ENCODE measurements at regions of chr10 and their contacts with region 1.

Region 1: DNA sequence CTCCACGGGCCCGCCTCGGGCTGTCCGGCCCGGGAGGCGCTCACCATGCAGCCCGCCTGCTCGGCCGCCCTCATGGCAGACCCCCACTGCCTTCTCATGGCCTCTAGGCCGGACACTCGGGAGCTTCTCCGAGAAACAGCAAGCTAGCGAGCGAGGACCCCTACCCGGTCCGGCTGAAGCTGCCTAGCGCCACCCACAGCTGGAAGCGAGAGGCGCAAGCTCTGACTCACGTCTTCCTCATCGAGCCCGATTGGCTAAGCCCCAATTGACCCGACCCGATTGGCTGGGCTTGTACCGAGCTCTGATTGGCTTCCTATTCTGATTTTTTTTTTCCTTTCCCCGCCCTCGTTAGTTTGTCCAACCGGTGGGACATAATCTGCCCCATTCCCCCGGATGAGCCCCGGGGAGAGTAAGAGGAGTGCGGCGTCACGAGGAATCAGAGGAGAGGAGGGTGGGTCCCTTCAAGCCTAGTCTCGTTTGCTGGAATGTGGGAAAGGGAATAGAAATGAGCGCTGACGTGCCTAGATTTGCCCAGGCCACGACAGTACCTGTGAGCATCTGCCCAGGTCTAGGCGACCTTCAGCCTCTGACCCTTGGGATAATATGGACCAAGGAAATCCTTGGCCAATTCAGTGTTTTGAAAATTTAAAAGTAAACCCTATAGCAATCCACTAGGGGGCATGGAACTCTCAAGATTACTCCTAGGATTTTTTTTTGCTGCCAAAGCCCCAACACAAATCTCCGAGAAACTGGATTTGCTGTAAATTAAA is at the start of gene TYSND1:
- DNase-seq: peak; percentile 80 to 95 (median 90)
- ATAC-seq: peak; percentile 80 to 86 (median 86)
- H3K4me3 ChIP-seq: peak within 1 kb of the TSS; percentile 70 to 81
- H3K4me3 Mint-ChIP-seq: peak within 1 kb of the TSS; percentile 89 to 92 (median 91)
- H3K27ac ChIP-seq: peak within 1 kb of the TSS; percentile 70
- H3K27ac Mint-ChIP-seq: peak within 1 kb of the TSS; percentile 93 to 94
- H3K4me1 ChIP-seq: peaks cover 7 to 34% of the 10 kb centered on the region in 2 experiments
- H3K4me1 Mint-ChIP-seq: peaks cover 39 to 46% (median 42%) of the 10 kb centered on the region in 3 donors
- H3K27me3 ChIP-seq: no peaks in the 10 kb centered on the region
- H3K27me3 Mint-ChIP-seq: no peaks in the 10 kb centered on the region
- total RNA-seq, gene TYSND1: 18.3 to 41.0 (median 38.7) TPM

Region 2: GRCh38 chr10:70063418-70064098 is 83.1 kb before region 1 on chr10:
- CTCF ChIA-PET with region 1: no interaction called
- POLR2A ChIA-PET with region 1: no interaction called
- DNase-seq: no peak
- ATAC-seq: no peak
- H3K4me3 ChIP-seq: no peak overlapping the region
- H3K4me3 Mint-ChIP-seq: no peak overlapping the region
- H3K27ac ChIP-seq: no peak overlapping the region
- H3K27ac Mint-ChIP-seq: no peak overlapping the region
- H3K4me1 ChIP-seq: no peaks in the 10 kb centered on the region
- H3K4me1 Mint-ChIP-seq: no peaks in the 10 kb centered on the region
- H3K27me3 ChIP-seq: no peaks in the 10 kb centered on the region
- H3K27me3 Mint-ChIP-seq: peaks cover 0 to 2% of the 10 kb centered on the region in 2 donors

Region 3: DNA sequence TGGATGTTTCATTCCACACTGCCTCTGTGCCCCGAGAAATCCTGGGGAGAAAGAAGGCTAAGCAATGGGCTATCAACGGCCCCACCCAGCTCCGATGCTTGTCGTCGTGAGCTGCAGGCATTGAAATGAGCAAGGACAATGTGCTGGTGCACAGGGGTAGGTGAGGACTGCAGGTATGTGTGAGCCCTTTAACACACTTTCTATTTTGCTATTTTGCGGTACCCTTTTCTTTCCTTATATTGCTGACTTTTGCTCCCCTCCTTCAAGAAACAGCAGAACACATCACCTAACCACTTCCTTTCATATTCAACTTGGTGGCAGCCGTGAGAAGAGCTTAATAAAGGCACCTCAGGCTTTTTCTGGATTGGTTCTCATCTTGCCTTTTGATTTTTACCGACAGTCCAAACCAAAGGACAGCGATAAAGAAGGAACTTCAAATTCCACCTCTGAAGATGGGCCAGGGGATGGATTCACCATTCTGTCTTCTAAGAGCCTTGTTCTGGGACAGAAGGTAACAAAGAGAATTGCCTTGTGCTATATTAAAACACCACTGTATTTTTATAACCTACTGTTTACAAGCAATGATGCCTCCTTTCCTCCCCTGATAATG is 53.2 kb before region 1 on chr10:
- CTCF ChIA-PET with region 1: interaction called in 1 of 2 experiments, 30 read pairs
- POLR2A ChIA-PET with region 1: interaction called, 4 read pairs
- DNase-seq: peak in 17 of 35 experiments; percentile 1 to 61 (median 12)
- ATAC-seq: peak; percentile 72 to 79 (median 74)
- H3K4me3 ChIP-seq: peak overlapping the region; percentile 42 to 54
- H3K4me3 Mint-ChIP-seq: peak overlapping the region; percentile 86 to 90 (median 90)
- H3K27ac ChIP-seq: peak overlapping the region; percentile 88
- H3K27ac Mint-ChIP-seq: peak overlapping the region; percentile 96 to 98
- H3K4me1 ChIP-seq: peaks cover 17 to 34% of the 10 kb centered on the region in 2 experiments
- H3K4me1 Mint-ChIP-seq: peaks cover 44 to 59% (median 58%) of the 10 kb centered on the region in 3 donors
- H3K27me3 ChIP-seq: no peaks in the 10 kb centered on the region
- H3K27me3 Mint-ChIP-seq: no peaks in the 10 kb centered on the region

Region 4: GRCh38 chr10:70162892-70163201 is 16.2 kb after region 1 on chr10:
- CTCF ChIA-PET with region 1: interaction called, 6 to 104 read pairs
- POLR2A ChIA-PET with region 1: interaction called, 4 read pairs
- DNase-seq: peak in 32 of 35 experiments; percentile 23 to 69 (median 46)
- ATAC-seq: peak; percentile 75 to 90 (median 81)
- H3K4me3 ChIP-seq: peak overlapping the region in 1 of 2 donors; percentile 27
- H3K4me3 Mint-ChIP-seq: peak overlapping the region; percentile 53 to 66 (median 59)
- H3K27ac ChIP-seq: peak overlapping the region; percentile 55
- H3K27ac Mint-ChIP-seq: peak overlapping the region; percentile 83 to 86
- H3K4me1 ChIP-seq: peaks cover 44 to 45% of the 10 kb centered on the region in 2 experiments
- H3K4me1 Mint-ChIP-seq: peaks cover 70 to 77% (median 76%) of the 10 kb centered on the region in 3 donors
- H3K27me3 ChIP-seq: no peaks in the 10 kb centered on the region
- H3K27me3 Mint-ChIP-seq: no peaks in the 10 kb centered on the region

Region 5: DNA sequence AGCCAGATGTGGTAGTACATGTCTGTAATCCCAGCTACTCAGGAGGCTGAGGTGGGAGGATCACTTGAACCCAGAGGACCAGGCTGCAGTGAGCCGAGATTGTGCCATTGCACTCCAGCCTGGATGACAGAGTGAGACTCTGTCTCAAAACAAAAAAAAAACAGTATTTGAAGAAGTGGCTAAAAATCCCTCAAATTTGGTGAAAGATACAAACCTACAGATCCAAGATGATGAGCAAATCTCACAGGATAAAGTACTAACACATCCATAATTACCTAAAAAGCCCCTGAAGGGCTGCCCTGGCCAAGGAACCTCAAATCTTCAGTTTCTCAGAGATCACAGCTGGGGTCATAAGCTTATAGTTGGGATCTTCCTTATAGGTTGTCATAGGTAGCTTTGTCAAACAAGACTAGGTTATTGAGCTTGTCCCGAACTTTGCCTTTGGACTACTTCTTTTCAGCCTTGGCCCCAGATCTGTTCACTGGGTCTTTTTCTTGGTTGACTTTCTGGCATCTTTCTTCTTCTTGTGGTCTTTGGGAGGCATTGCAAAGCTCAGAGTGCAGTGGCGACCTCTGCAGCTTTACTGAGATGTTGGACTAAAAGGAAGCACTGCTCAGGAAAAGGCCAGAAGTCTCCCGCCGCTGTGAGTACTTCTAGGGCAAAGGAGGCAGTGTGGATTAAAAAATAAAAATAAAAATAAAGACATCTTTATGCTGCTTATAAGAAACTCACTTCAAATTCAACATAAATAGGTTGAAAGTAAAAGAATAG is 52.2 kb after region 1 on chr10:
- CTCF ChIA-PET with region 1: interaction called in 1 of 2 experiments, 11 read pairs
- POLR2A ChIA-PET with region 1: interaction called in 1 of 2 experiments, 3 read pairs
- DNase-seq: peak in 5 of 35 experiments; percentile 5 to 32 (median 6)
- ATAC-seq: peak in 2 of 4 experiments; percentile 40 to 45
- H3K4me3 ChIP-seq: no peak overlapping the region
- H3K4me3 Mint-ChIP-seq: no peak overlapping the region
- H3K27ac ChIP-seq: no peak overlapping the region
- H3K27ac Mint-ChIP-seq: peak overlapping the region in 1 of 2 donors; percentile 62
- H3K4me1 ChIP-seq: peaks cover 0 to 15% of the 10 kb centered on the region in 2 experiments
- H3K4me1 Mint-ChIP-seq: peaks cover 15 to 17% (median 16%) of the 10 kb centered on the region in 3 donors
- H3K27me3 ChIP-seq: no peaks in the 10 kb centered on the region
- H3K27me3 Mint-ChIP-seq: no peaks in the 10 kb centered on the region

Region 6: GRCh38 chr10:70404036-70404786 is 257.5 kb after region 1 on chr10 and contains the start of gene EIF4EBP2:
- CTCF ChIA-PET with region 1: interaction called in 1 of 2 experiments, 15 read pairs
- POLR2A ChIA-PET with region 1: interaction called in 1 of 2 experiments, 4 read pairs
- DNase-seq: peak; percentile 89 to 100 (median 97)
- ATAC-seq: peak; percentile 92 to 96 (median 96)
- H3K4me3 ChIP-seq: peak within 1 kb of the TSS; percentile 63 to 69
- H3K4me3 Mint-ChIP-seq: peak within 1 kb of the TSS; percentile 95 to 100 (median 96)
- H3K27ac ChIP-seq: peak within 1 kb of the TSS; percentile 55
- H3K27ac Mint-ChIP-seq: peak within 1 kb of the TSS; percentile 91 to 92
- H3K4me1 ChIP-seq: peaks cover 11 to 30% of the 10 kb centered on the region in 2 experiments
- H3K4me1 Mint-ChIP-seq: peaks cover 41 to 54% (median 50%) of the 10 kb centered on the region in 3 donors
- H3K27me3 ChIP-seq: no peaks in the 10 kb centered on the region
- H3K27me3 Mint-ChIP-seq: no peaks in the 10 kb centered on the region
- total RNA-seq, gene EIF4EBP2: 39.9 to 47.7 (median 42.6) TPM